ENCODE measurements at regions of chr1 and their contacts with region 1.

Region 1: DNA sequence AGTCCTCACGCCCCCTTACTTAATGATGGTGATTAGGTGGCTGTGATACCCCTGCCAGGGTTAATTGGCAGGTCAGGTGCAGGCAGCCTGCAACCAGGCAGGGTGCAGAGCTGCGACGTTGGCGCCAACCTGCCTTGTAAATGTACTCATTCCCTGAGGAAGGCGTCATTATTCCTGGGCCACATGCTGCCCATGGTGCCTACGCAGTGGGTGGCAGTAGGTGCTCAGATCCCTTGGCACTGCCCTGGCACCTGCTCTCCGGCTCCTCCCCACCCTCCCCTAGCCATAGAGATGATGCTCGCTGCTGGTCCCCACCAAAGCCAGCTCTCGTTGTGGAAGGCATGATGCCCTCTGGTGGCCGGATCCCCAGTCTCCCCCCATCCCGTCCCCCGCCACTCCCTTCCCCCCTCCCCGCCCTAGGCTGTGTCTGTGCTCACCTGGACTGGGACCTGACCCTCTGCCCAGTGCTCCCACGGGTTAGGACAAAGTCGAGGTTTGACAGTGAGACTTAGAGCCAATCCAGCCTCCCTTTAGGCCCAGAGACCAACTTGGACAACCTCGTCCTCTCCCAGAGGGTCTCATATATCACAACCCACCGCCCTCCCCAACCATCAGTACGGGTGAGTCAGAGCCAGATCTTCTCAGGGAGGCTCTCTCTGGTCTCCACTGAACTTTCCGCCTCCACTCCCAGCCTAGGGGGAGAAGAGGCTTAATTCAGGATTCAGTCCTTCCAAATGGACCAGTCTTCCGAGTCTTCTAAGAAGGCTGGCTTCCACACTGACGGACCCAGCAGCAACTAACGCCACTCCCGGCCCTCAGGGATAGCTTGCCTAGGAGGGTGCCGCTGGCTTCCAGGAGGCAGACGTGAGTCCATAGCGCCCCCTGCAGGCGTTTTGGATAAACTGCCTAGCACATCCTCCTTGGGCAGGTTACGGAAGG is 5.7 kb downstream of the KRTCAP2 start:
- DNase-seq: peak; percentile 95
- ATAC-seq: peak; percentile 88
- H3K4me3 Mint-ChIP-seq: peak overlapping the region; percentile 21
- H3K27ac Mint-ChIP-seq: peak overlapping the region; percentile 1
- H3K4me1 Mint-ChIP-seq: peaks cover 26% of the 10 kb centered on the region
- H3K27me3 Mint-ChIP-seq: no peaks in the 10 kb centered on the region

Region 2: GRCh38 chr1:154943649-154944400 is 223.6 kb before region 1 on chr1:
- CTCF ChIA-PET with region 1: no interaction called
- POLR2A ChIA-PET with region 1: no interaction called
- intact Hi-C with region 1: no loop called
- DNase-seq: peak; percentile 70
- ATAC-seq: peak; percentile 48
- H3K4me3 Mint-ChIP-seq: no peak overlapping the region
- H3K27ac Mint-ChIP-seq: peak overlapping the region; percentile 90
- H3K4me1 Mint-ChIP-seq: peaks cover 53% of the 10 kb centered on the region
- H3K27me3 Mint-ChIP-seq: no peaks in the 10 kb centered on the region

Region 3: DNA sequence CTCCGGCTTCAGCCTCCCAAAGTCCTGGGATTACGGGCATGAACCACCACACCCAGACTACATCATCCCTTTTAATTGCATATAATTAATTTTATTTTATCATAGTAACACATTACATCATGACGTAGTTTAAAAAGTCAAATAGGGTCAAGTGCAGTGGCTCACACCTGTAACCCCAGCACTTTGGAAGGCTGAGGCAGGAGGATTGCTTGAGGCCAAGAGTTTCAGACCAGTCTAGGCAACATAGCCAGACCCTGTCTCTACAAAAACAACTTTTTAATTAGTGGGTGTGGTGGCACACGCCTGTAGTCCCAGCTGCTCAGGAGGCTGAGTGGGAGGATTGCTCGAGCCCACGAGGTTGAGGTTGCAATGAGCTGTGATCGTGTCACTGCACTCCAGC is 68.1 kb before region 1 on chr1:
- CTCF ChIA-PET with region 1: interaction called, 20 read pairs
- POLR2A ChIA-PET with region 1: no interaction called
- intact Hi-C with region 1: no loop called
- DNase-seq: no peak
- ATAC-seq: no peak
- H3K4me3 Mint-ChIP-seq: no peak overlapping the region
- H3K27ac Mint-ChIP-seq: no peak overlapping the region
- H3K4me1 Mint-ChIP-seq: no peaks in the 10 kb centered on the region
- H3K27me3 Mint-ChIP-seq: peaks cover 6% of the 10 kb centered on the region

Region 4: GRCh38 chr1:155227261-155228095 is 60.0 kb after region 1 on chr1:
- CTCF ChIA-PET with region 1: no interaction called
- POLR2A ChIA-PET with region 1: no interaction called
- intact Hi-C with region 1: no loop called
- DNase-seq: peak; percentile 99
- ATAC-seq: peak; percentile 98
- H3K4me3 Mint-ChIP-seq: peak overlapping the region; percentile 96
- H3K27ac Mint-ChIP-seq: peak overlapping the region; percentile 97
- H3K4me1 Mint-ChIP-seq: peaks cover 27% of the 10 kb centered on the region
- H3K27me3 Mint-ChIP-seq: no peaks in the 10 kb centered on the region

Measured in activated CD4-positive, alpha-beta T cell treated with anti-CD3 and anti-CD28 coated beads for 36 hours (primary cell).